IMR-90 (cell line): ENCODE measurements at regions of chr7 and their contacts with region 1.

Region 1: GRCh38 chr7:149125863-149126661 is at the start of gene ZNF425:
- DNase-seq: peak; percentile 86
- ATAC-seq: peak; percentile 93
- H3K4me3 ChIP-seq: peak within 1 kb of the TSS; percentile 84
- H3K27ac ChIP-seq: peak within 1 kb of the TSS; percentile 84
- H3K4me1 ChIP-seq: peaks cover 3% of the 10 kb centered on the region
- H3K27me3 ChIP-seq: no peaks in the 10 kb centered on the region
- CTCF ChIP-seq: peak; percentile 97
- POLR2A ChIP-seq: peak; percentile 97
- RAD21 ChIP-seq: peak; percentile 22; the same call in 1 of the 2 replicates
- total RNA-seq, gene ZNF425: 2.3 and 2.8 TPM in 2 replicates

Region 2: GRCh38 chr7:149028346-149029109 is 97.5 kb before region 1 on chr7 and contains the start of gene PDIA4:
- CTCF ChIA-PET with region 1: no interaction called
- POLR2A ChIA-PET with region 1: no interaction called
- dilution Hi-C with region 1: no loop called
- in situ Hi-C with region 1: no loop called
- intact Hi-C with region 1: loop called (anchors 5 kb)
- DNase-seq: peak; percentile 99
- ATAC-seq: peak; percentile 95
- H3K4me3 ChIP-seq: peak within 1 kb of the TSS; percentile 84
- H3K27ac ChIP-seq: peak within 1 kb of the TSS; percentile 63
- H3K4me1 ChIP-seq: no peaks in the 10 kb centered on the region
- H3K27me3 ChIP-seq: no peaks in the 10 kb centered on the region
- CTCF ChIP-seq: peak; percentile 34; the same call in 1 of the 2 replicates
- POLR2A ChIP-seq: peak; percentile 59
- RAD21 ChIP-seq: peak; percentile 9; the same call in 1 of the 2 replicates
- total RNA-seq, gene PDIA4: 277 and 304 TPM in 2 replicates

Region 3: GRCh38 chr7:149147072-149147751 is 21.1 kb after region 1 on chr7 and contains the start of gene ZNF398:
- CTCF ChIA-PET with region 1: interaction called, 5 read pairs
- POLR2A ChIA-PET with region 1: interaction called, 6 read pairs
- dilution Hi-C with region 1: no loop called
- in situ Hi-C with region 1: no loop called
- intact Hi-C with region 1: loop called (anchors 1 kb)
- DNase-seq: peak; percentile 77
- ATAC-seq: peak; percentile 91
- H3K4me3 ChIP-seq: peak within 1 kb of the TSS; percentile 67
- H3K27ac ChIP-seq: peak within 1 kb of the TSS; percentile 97
- H3K4me1 ChIP-seq: 0 out of 2 replicates have a peak, but pooled peaks cover 2% of the 10 kb centered on the region
- H3K27me3 ChIP-seq: no peaks in the 10 kb centered on the region
- CTCF ChIP-seq: peak; percentile 81
- POLR2A ChIP-seq: peak; percentile 65
- RAD21 ChIP-seq: no peak; the same call in 1 of the 2 replicates
- total RNA-seq, gene ZNF398: 7.9 and 9.2 TPM in 2 replicates